HCT116 (cell line): ENCODE measurements at regions of chr3 and their contacts with region 1.

Region 1: DNA sequence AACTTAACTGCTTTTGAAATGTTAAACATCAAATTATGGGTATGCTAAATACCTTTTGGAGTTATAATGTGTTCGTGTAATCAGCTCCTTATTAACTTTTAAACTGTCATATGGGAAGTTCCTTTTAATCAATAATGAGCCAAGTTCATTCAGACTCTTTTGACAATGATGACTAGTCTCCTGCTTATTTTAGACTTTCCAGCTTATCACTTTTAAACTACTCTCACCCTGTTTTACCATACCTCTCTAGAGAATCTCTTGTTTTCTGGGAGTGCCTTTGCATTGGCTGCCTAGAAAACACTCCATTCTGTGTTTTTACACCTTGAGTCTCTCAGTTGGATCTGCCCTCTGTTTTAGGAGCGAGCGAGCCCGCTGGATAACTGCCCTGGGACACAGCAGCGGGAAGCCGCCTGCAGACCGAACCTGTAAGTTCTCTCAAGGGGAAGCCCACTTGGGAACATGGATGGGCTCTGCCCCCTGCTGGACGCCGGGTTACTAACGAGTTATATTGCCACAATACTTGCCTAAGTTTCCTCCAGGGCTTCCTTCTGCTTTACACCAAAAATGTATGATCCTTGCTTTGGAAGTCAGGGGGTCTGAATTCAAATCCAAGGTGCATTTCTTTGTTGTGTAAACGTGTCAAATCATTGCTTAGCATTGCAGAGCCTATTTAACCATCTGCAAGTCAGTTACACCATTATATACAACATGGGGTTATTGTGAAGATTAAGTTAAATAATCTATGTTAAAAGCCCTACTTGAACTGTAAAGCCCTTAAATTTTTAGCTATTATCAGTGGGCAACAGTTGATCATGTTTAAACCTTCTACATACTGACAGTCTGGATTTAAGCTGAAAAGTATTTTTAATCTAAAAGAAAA is 71.3 kb downstream of the DHX36 start:
- DNase-seq: peak; percentile 71
- ATAC-seq: peak; percentile 95
- H3K4me3 ChIP-seq: no peak overlapping the region
- H3K27ac ChIP-seq: no peak overlapping the region
- H3K4me1 ChIP-seq: no peaks in the 10 kb centered on the region
- H3K27me3 ChIP-seq: no peaks in the 10 kb centered on the region
- CTCF ChIP-seq: peak; percentile 82 to 93 (median 84)
- POLR2A ChIP-seq: no peak
- RAD21 ChIP-seq: peak; percentile 86

Region 2: DNA sequence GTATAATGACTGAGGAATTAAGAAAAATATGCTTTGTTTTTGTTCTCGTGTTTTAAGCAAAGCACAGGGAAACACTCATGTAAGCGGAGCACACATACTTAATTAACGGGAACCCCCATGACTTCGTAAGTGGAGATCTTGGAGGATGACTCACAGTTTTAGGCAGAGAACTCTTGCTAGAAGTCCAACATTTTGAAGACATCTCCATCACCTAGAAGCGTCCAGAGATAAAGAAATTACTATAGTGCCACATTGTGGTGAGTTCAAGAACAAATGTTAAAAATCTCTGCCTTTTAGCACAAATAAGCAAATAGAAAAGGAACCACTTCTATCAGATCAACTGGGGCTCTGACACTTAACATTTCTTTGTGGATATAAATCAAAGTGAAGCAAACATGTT is 325.9 kb before region 1 on chr3:
- CTCF ChIA-PET with region 1: no interaction called
- POLR2A ChIA-PET with region 1: no interaction called
- RAD21 ChIA-PET with region 1: no interaction called
- intact Hi-C with region 1: no loop called
- DNase-seq: peak; percentile 12
- ATAC-seq: peak; percentile 72
- H3K4me3 ChIP-seq: no peak overlapping the region
- H3K27ac ChIP-seq: no peak overlapping the region
- H3K4me1 ChIP-seq: no peaks in the 10 kb centered on the region
- H3K27me3 ChIP-seq: no peaks in the 10 kb centered on the region
- CTCF ChIP-seq: peak; percentile 14 to 48 (median 38); a peak in 4 of 6 replicates
- POLR2A ChIP-seq: no peak
- RAD21 ChIP-seq: peak; percentile 64

Region 3: GRCh38 chr3:154003649-154004048 is 249.3 kb before region 1 on chr3:
- CTCF ChIA-PET with region 1: no interaction called
- POLR2A ChIA-PET with region 1: no interaction called
- RAD21 ChIA-PET with region 1: no interaction called
- intact Hi-C with region 1: loop called (anchors 10 kb)
- DNase-seq: no peak
- ATAC-seq: no peak
- H3K4me3 ChIP-seq: no peak overlapping the region
- H3K27ac ChIP-seq: no peak overlapping the region
- H3K4me1 ChIP-seq: no peaks in the 10 kb centered on the region
- H3K27me3 ChIP-seq: no peaks in the 10 kb centered on the region
- CTCF ChIP-seq: no peak
- POLR2A ChIP-seq: no peak
- RAD21 ChIP-seq: no peak

Region 4: DNA sequence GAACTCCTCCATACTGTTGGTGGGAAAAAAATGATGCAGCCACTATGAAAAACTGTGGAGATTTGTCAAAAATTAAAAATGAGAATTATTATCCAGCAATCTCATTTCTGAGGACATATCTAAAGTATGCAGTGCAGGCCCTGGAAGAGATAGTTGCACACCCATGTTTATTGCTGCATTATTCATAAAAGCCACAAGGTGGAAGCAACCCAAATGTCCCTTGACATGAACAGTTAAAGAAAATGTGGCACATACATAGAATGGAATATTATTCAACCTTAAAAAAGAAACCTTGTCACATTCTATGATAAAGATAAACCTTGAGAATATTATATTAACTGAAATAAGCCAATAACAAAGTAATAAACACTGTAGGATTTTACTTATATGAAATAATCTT is 212.7 kb before region 1 on chr3:
- CTCF ChIA-PET with region 1: no interaction called
- POLR2A ChIA-PET with region 1: no interaction called
- RAD21 ChIA-PET with region 1: no interaction called
- intact Hi-C with region 1: loop called (anchors 1 kb)
- DNase-seq: peak; percentile 22
- ATAC-seq: peak; percentile 90
- H3K4me3 ChIP-seq: no peak overlapping the region
- H3K27ac ChIP-seq: no peak overlapping the region
- H3K4me1 ChIP-seq: no peaks in the 10 kb centered on the region
- H3K27me3 ChIP-seq: no peaks in the 10 kb centered on the region
- CTCF ChIP-seq: peak; percentile 40 to 59 (median 41); a peak in 5 of 6 replicates
- POLR2A ChIP-seq: no peak
- RAD21 ChIP-seq: peak; percentile 52

Region 5: GRCh38 chr3:154095832-154096421 is 157.1 kb before region 1 on chr3:
- CTCF ChIA-PET with region 1: interaction called, 4 read pairs
- POLR2A ChIA-PET with region 1: no interaction called
- RAD21 ChIA-PET with region 1: no interaction called
- intact Hi-C with region 1: loop called (anchors 1 kb)
- DNase-seq: peak; percentile 12
- ATAC-seq: peak; percentile 61
- H3K4me3 ChIP-seq: no peak overlapping the region
- H3K27ac ChIP-seq: no peak overlapping the region
- H3K4me1 ChIP-seq: no peaks in the 10 kb centered on the region
- H3K27me3 ChIP-seq: no peaks in the 10 kb centered on the region
- CTCF ChIP-seq: peak; percentile 27 to 67 (median 55); a peak in 5 of 6 replicates
- POLR2A ChIP-seq: no peak
- RAD21 ChIP-seq: peak; percentile 73